HCT116 (cell line): ENCODE measurements at regions of chr5 and their contacts with region 1.

Region 1: GRCh38 chr5:78677777-78678668 is 29.5 kb upstream of the LHFPL2 start:
- DNase-seq: peak; percentile 69
- ATAC-seq: peak; percentile 85
- H3K4me3 ChIP-seq: no peak overlapping the region
- H3K27ac ChIP-seq: no peak overlapping the region
- H3K4me1 ChIP-seq: peaks cover 2 to 17% of the 10 kb centered on the region in 2 experiments; a peak in 2 of 4 replicates
- H3K27me3 ChIP-seq: no peaks in the 10 kb centered on the region
- CTCF ChIP-seq: no peak
- POLR2A ChIP-seq: no peak
- RAD21 ChIP-seq: peak; percentile 44

Region 2: GRCh38 chr5:78699565-78700241 is 21.7 kb after region 1 on chr5:
- CTCF ChIA-PET with region 1: no interaction called
- POLR2A ChIA-PET with region 1: interaction called, 4 read pairs
- RAD21 ChIA-PET with region 1: no interaction called
- intact Hi-C with region 1: loop called (anchors 1 kb)
- DNase-seq: peak; percentile 99
- ATAC-seq: peak; percentile 90
- H3K4me3 ChIP-seq: peak overlapping the region in 1 of 2 experiments; percentile 44; a peak in 2 of 4 replicates
- H3K27ac ChIP-seq: peak overlapping the region; percentile 77
- H3K4me1 ChIP-seq: peaks cover 22 to 51% of the 10 kb centered on the region in 2 experiments
- H3K27me3 ChIP-seq: no peaks in the 10 kb centered on the region
- CTCF ChIP-seq: no peak
- POLR2A ChIP-seq: no peak
- RAD21 ChIP-seq: peak; percentile 31